IMR-90 (cell line): ENCODE measurements at regions of chr19 and their contacts with region 1.

Region 1: DNA sequence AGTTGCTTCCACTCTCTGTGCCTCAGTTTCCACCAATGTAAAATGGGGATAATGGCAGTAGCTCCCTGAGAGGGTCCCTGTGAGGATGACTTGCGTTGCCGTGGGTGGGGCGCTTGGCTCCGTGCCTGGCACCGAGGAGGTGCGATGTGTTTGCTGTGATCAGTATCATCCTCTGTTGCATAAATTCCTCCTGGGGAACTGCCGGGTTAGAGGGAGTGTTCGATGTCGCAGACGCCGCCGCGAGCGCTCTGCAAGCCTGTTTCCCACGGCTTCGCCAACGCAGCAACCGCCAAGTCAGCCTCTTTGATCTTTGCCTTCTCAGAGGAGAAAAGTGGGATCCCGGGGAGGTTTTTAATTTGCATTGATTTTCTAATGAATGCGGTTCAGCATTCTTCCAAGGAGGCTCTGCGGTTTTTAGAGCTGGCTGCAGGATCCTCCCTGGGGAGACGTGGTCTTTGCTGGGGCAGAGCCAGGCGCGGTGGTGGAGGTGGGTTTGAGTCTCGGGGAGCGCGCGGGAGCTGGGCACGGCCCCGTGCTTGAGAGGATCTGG is 7.6 kb downstream of the GPR32 start:
- DNase-seq: peak; percentile 14
- ATAC-seq: peak; percentile 24; the same call in 1 of the 2 replicates
- H3K4me3 ChIP-seq: no peak overlapping the region
- H3K27ac ChIP-seq: no peak overlapping the region
- H3K4me1 ChIP-seq: no peaks in the 10 kb centered on the region
- H3K27me3 ChIP-seq: peaks cover 32% of the 10 kb centered on the region
- CTCF ChIP-seq: no peak
- POLR2A ChIP-seq: no peak
- RAD21 ChIP-seq: no peak

Region 2: GRCh38 chr19:50357178-50358100 is 420.4 kb before region 1 on chr19:
- CTCF ChIA-PET with region 1: no interaction called
- POLR2A ChIA-PET with region 1: no interaction called
- dilution Hi-C with region 1: no loop called
- in situ Hi-C with region 1: loop called (anchors 10 kb)
- intact Hi-C with region 1: loop called (anchors 1 kb)
- DNase-seq: peak; percentile 41
- ATAC-seq: peak; percentile 96
- H3K4me3 ChIP-seq: peak overlapping the region; percentile 36
- H3K27ac ChIP-seq: no peak overlapping the region
- H3K4me1 ChIP-seq: no peaks in the 10 kb centered on the region
- H3K27me3 ChIP-seq: peaks cover 6% of the 10 kb centered on the region; the same call in 1 of the 2 replicates
- CTCF ChIP-seq: peak; percentile 75
- POLR2A ChIP-seq: no peak
- RAD21 ChIP-seq: peak; percentile 72

Region 3: GRCh38 chr19:50368649-50369570 is 408.9 kb before region 1 on chr19:
- CTCF ChIA-PET with region 1: interaction called, 3 read pairs
- POLR2A ChIA-PET with region 1: no interaction called
- dilution Hi-C with region 1: no loop called
- in situ Hi-C with region 1: no loop called
- intact Hi-C with region 1: loop called (anchors 2 kb)
- DNase-seq: peak; percentile 83
- ATAC-seq: peak; percentile 95
- H3K4me3 ChIP-seq: peak overlapping the region; percentile 63
- H3K27ac ChIP-seq: peak overlapping the region; percentile 78
- H3K4me1 ChIP-seq: no peaks in the 10 kb centered on the region
- H3K27me3 ChIP-seq: no peaks in the 10 kb centered on the region
- CTCF ChIP-seq: peak; percentile 84
- POLR2A ChIP-seq: no peak
- RAD21 ChIP-seq: peak; percentile 85

Region 4: DNA sequence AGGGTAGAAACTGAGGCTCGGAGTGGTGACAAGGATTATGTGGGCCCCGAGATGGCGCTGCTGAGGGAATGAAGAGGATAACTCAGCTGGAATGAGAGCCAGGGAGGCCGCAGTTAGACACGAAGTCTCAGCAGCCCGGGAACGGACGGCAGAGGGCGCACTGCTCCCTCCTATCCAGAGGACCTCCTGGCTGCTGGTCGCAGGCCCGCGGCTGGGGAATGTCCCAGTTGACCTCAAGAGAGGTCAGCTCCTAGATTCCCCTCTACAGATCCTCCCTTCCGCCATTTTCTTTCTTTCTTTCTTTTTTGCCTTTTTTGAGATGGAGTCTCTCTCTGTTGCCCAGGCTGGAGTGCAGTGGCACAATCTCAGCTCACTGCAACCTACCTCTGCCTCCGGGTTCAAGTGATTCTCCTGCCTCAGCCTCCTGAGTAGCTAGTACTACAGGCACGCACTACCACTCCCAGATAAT is 240.0 kb before region 1 on chr19:
- CTCF ChIA-PET with region 1: interaction called, 6 read pairs
- POLR2A ChIA-PET with region 1: no interaction called
- dilution Hi-C with region 1: no loop called
- in situ Hi-C with region 1: loop called (anchors 10 kb)
- intact Hi-C with region 1: no loop called
- DNase-seq: peak; percentile 71
- ATAC-seq: peak; percentile 99
- H3K4me3 ChIP-seq: no peak overlapping the region
- H3K27ac ChIP-seq: no peak overlapping the region
- H3K4me1 ChIP-seq: no peaks in the 10 kb centered on the region
- H3K27me3 ChIP-seq: no peaks in the 10 kb centered on the region; the same call in 1 of the 2 replicates
- CTCF ChIP-seq: peak; percentile 88
- POLR2A ChIP-seq: no peak
- RAD21 ChIP-seq: peak; percentile 68

Region 5: GRCh38 chr19:50669302-50670101 is 108.3 kb before region 1 on chr19:
- CTCF ChIA-PET with region 1: interaction called, 6 read pairs
- POLR2A ChIA-PET with region 1: no interaction called
- dilution Hi-C with region 1: no loop called
- in situ Hi-C with region 1: no loop called
- intact Hi-C with region 1: loop called (anchors 1 kb)
- DNase-seq: peak; percentile 15
- ATAC-seq: peak; percentile 64
- H3K4me3 ChIP-seq: no peak overlapping the region
- H3K27ac ChIP-seq: no peak overlapping the region
- H3K4me1 ChIP-seq: peaks cover 2% of the 10 kb centered on the region
- H3K27me3 ChIP-seq: peaks cover 57% of the 10 kb centered on the region
- CTCF ChIP-seq: peak; percentile 75
- POLR2A ChIP-seq: no peak
- RAD21 ChIP-seq: peak; percentile 56

Region 6: GRCh38 chr19:50705422-50706019 is 72.3 kb before region 1 on chr19:
- CTCF ChIA-PET with region 1: no interaction called
- POLR2A ChIA-PET with region 1: no interaction called
- dilution Hi-C with region 1: no loop called
- in situ Hi-C with region 1: loop called (anchors 5 kb)
- intact Hi-C with region 1: loop called (anchors 1 kb)
- DNase-seq: peak; percentile 76
- ATAC-seq: peak; percentile 97
- H3K4me3 ChIP-seq: no peak overlapping the region
- H3K27ac ChIP-seq: no peak overlapping the region
- H3K4me1 ChIP-seq: peaks cover 1% of the 10 kb centered on the region; the same call in 1 of the 2 replicates
- H3K27me3 ChIP-seq: no peaks in the 10 kb centered on the region
- CTCF ChIP-seq: peak; percentile 87
- POLR2A ChIP-seq: no peak; the same call in 1 of the 2 replicates
- RAD21 ChIP-seq: peak; percentile 87

Region 7: DNA sequence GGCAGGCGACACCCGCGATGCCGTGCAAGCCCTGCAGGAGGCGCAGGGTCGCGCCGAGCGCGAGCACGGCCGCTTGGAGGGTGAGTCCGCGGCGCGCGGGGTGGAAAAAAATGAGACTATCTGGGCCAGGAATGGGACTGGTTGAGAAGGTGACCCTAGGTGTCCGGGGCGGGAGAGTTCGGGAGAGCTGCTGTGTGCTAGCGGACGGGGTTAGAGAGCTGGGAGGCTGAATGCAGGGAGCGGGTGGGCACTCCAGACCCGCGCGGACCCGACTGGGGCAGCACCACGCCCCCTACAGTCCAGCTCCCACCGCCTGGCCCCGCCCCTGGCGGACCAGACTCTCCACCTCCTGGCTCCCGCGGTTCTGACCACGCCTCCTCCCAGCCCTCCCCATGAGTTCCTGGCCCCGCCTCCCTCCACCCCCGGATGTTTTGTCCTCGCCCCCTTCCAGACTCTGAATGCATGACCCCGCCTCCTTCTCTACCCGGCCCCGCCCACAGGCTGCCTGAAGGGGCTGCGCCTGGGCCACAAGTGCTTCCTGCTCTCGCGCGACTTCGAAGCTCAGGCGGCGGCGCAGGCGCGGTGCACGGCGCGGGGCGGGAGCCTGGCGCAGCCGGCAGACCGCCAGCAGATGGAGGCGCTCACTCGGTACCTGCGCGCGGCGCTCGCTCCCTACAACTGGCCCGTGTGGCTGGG is 53.2 kb before region 1 on chr19:
- CTCF ChIA-PET with region 1: interaction called, 3 read pairs
- POLR2A ChIA-PET with region 1: no interaction called
- dilution Hi-C with region 1: no loop called
- in situ Hi-C with region 1: no loop called
- intact Hi-C with region 1: loop called (anchors 1 kb)
- DNase-seq: peak; percentile 99
- ATAC-seq: peak; percentile 86
- H3K4me3 ChIP-seq: peak overlapping the region; percentile 70
- H3K27ac ChIP-seq: peak overlapping the region; percentile 87
- H3K4me1 ChIP-seq: peaks cover 19% of the 10 kb centered on the region
- H3K27me3 ChIP-seq: no peaks in the 10 kb centered on the region
- CTCF ChIP-seq: peak; percentile 77
- POLR2A ChIP-seq: 0 out of 2 replicates have a peak, but pooled peaks have one; percentile 29
- RAD21 ChIP-seq: peak; percentile 38; the same call in 1 of the 2 replicates